ENCODE measurements at regions of chr15 and their contacts with region 1.

Region 1: GRCh38 chr15:91852741-91853510 is 582 bp upstream of the SLCO3A1 start:
- DNase-seq: peak; percentile 74
- H3K4me3 Mint-ChIP-seq: peak overlapping the region; percentile 82
- H3K27ac Mint-ChIP-seq: peak overlapping the region; percentile 80
- H3K4me1 Mint-ChIP-seq: peaks cover 61% of the 10 kb centered on the region
- H3K27me3 Mint-ChIP-seq: peaks cover 9% of the 10 kb centered on the region

Region 2: GRCh38 chr15:90101969-90102890 is 1750.7 kb before region 1 on chr15 and contains the start of gene IDH2:
- intact Hi-C with region 1: loop called (anchors 10 kb)
- DNase-seq: peak; percentile 72
- H3K4me3 Mint-ChIP-seq: peak within 1 kb of the TSS; percentile 89
- H3K27ac Mint-ChIP-seq: peak within 1 kb of the TSS; percentile 94
- H3K4me1 Mint-ChIP-seq: peaks cover 52% of the 10 kb centered on the region
- H3K27me3 Mint-ChIP-seq: peaks cover 12% of the 10 kb centered on the region
- total RNA-seq, gene IDH2: 94.1 and 96.3 TPM in 2 replicates

Region 3: GRCh38 chr15:91302588-91303439 is 550.1 kb before region 1 on chr15:
- intact Hi-C with region 1: loop called (anchors 2 kb)
- DNase-seq: no peak
- H3K4me3 Mint-ChIP-seq: no peak overlapping the region
- H3K27ac Mint-ChIP-seq: no peak overlapping the region
- H3K4me1 Mint-ChIP-seq: peaks cover 16% of the 10 kb centered on the region
- H3K27me3 Mint-ChIP-seq: peaks cover 48% of the 10 kb centered on the region

Region 4: GRCh38 chr15:91478717-91479191 is 374.2 kb before region 1 on chr15:
- intact Hi-C with region 1: no loop called
- DNase-seq: no peak
- H3K4me3 Mint-ChIP-seq: no peak overlapping the region
- H3K27ac Mint-ChIP-seq: no peak overlapping the region
- H3K4me1 Mint-ChIP-seq: peaks cover 44% of the 10 kb centered on the region
- H3K27me3 Mint-ChIP-seq: peaks cover 2% of the 10 kb centered on the region

Region 5: DNA sequence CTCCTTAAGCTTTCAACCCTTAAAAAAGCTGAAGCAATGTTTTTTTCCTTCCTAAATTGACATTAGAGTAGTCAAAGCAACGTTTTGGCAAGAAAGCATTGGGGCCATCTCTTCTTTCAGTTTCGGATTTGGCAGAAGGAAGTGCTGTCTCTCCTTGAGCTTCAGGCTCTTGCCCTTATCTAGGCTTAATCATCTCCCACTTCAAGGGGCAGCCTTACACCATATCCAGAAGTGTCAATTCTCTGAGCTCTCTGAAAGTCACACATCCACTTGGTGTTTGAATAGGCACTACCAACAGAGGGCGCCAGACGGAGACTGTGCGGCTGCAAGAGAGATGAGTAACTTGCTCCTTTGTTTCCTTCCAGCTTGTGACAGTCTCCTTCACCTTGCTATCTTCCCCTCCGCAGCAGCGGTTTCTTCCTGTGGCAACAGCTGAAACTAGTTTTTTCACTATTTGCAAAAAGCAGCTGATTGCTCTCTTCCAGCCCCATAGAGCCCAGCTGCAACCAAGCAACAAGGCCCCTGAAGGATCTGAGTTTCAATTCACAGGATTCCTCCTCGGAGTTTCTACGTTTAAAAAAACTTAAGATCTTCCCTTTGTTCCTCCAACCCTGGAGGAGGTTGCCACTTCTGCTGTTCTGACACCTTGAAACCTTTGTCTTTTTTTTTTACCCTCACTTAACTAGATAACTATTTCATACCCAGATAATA is 146.4 kb before region 1 on chr15:
- intact Hi-C with region 1: loop called (anchors 1 kb)
- DNase-seq: peak; percentile 84
- H3K4me3 Mint-ChIP-seq: peak overlapping the region; percentile 9
- H3K27ac Mint-ChIP-seq: peak overlapping the region; percentile 76
- H3K4me1 Mint-ChIP-seq: peaks cover 24% of the 10 kb centered on the region
- H3K27me3 Mint-ChIP-seq: peaks cover 22% of the 10 kb centered on the region

Region 6: GRCh38 chr15:91897585-91898372 is 44.9 kb after region 1 on chr15:
- intact Hi-C with region 1: no loop called
- DNase-seq: no peak
- H3K4me3 Mint-ChIP-seq: no peak overlapping the region
- H3K27ac Mint-ChIP-seq: no peak overlapping the region
- H3K4me1 Mint-ChIP-seq: peaks cover 9% of the 10 kb centered on the region
- H3K27me3 Mint-ChIP-seq: peaks cover 2% of the 10 kb centered on the region

Region 7: GRCh38 chr15:91942676-91943576 is 90.0 kb after region 1 on chr15:
- intact Hi-C with region 1: loop called (anchors 2 kb)
- DNase-seq: peak; percentile 44
- H3K4me3 Mint-ChIP-seq: peak overlapping the region; percentile 42
- H3K27ac Mint-ChIP-seq: peak overlapping the region; percentile 84
- H3K4me1 Mint-ChIP-seq: peaks cover 40% of the 10 kb centered on the region
- H3K27me3 Mint-ChIP-seq: no peaks in the 10 kb centered on the region

Region 8: GRCh38 chr15:92077353-92078085 is 224.6 kb after region 1 on chr15:
- intact Hi-C with region 1: loop called (anchors 1 kb)
- DNase-seq: peak; percentile 41
- H3K4me3 Mint-ChIP-seq: no peak overlapping the region
- H3K27ac Mint-ChIP-seq: no peak overlapping the region
- H3K4me1 Mint-ChIP-seq: peaks cover 27% of the 10 kb centered on the region
- H3K27me3 Mint-ChIP-seq: no peaks in the 10 kb centered on the region

Region 9: GRCh38 chr15:92808978-92809879 is 956.3 kb after region 1 on chr15:
- intact Hi-C with region 1: loop called (anchors 10 kb)
- DNase-seq: peak; percentile 100
- H3K4me3 Mint-ChIP-seq: peak overlapping the region; percentile 94
- H3K27ac Mint-ChIP-seq: peak overlapping the region; percentile 98
- H3K4me1 Mint-ChIP-seq: peaks cover 60% of the 10 kb centered on the region
- H3K27me3 Mint-ChIP-seq: no peaks in the 10 kb centered on the region

Measured in activated T-helper 1 cell treated with anti-CD3 and anti-CD28 coated beads, Interleukin-12 subunit alpha, Interleukin-12 subunit beta, Interleukin-2, Interleukin-4 antibody, amounts not matched to agents 30 ng/mL and 10 ng/mL and 1 ng/mL, durations not matched to agents 14 hours and 24 hours and 36 hours (primary cell).